ENCODE measurements at regions of chr1 and their contacts with region 1.

Region 1: DNA sequence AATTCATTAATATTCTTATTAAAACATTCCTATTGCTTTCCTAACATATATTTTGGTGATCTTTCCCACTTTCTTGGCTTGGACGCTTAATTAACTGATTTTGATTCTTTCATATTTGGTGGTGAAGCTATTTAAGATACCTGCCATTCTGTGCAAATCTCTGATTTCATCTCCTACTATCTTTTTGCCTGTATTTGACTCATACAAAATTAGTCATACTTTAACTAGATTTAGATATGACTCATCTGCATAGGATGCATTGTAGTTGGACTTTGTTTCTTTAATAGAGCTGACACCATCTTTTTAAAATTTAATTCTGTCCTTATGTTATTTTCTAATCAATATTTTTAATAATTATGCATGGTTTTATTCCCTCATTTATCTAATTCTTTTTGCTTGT is 93.8 kb upstream of the PLPPR4 start:
- DNase-seq: no peak
- ATAC-seq: no peak
- H3K4me3 ChIP-seq: no peak overlapping the region
- H3K27ac ChIP-seq: no peak overlapping the region
- H3K4me1 ChIP-seq: no peaks in the 10 kb centered on the region
- H3K27me3 ChIP-seq: no peaks in the 10 kb centered on the region
- CTCF ChIP-seq: no peak

Region 2: DNA sequence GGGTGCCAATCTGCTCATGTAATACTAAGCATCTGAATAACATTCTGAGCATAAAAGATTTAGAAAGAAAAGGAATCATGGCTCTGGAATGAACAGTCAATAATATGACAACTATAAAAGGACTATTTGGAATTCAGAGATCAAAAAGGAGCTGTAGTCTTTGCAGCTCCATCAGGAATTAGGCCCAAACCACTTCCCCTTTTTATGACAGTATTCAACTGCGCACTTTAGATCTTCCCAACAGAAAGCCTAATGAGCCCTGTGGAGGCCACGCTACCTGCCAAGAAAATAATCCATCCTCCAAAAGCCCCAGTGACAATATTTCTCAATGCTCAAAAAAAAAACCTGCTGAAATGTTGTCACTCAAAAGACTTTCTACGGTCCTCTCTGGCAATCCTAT is 345.8 kb before region 1 on chr1:
- intact Hi-C with region 1: no loop called
- DNase-seq: no peak
- ATAC-seq: no peak
- H3K4me3 ChIP-seq: no peak overlapping the region
- H3K27ac ChIP-seq: no peak overlapping the region
- H3K4me1 ChIP-seq: no peaks in the 10 kb centered on the region
- H3K27me3 ChIP-seq: no peaks in the 10 kb centered on the region
- CTCF ChIP-seq: no peak

Region 3: GRCh38 chr1:99737016-99737415 is 566.5 kb after region 1 on chr1:
- intact Hi-C with region 1: loop called in 1 of 2 experiments (anchors 10 kb)
- DNase-seq: peak in 2 of 4 donors; percentile 3 to 16
- ATAC-seq: peak; percentile 62
- H3K4me3 ChIP-seq: no peak overlapping the region
- H3K27ac ChIP-seq: no peak overlapping the region
- H3K4me1 ChIP-seq: no peaks in the 10 kb centered on the region
- H3K27me3 ChIP-seq: no peaks in the 10 kb centered on the region
- CTCF ChIP-seq: no peak

Measured in left lung (tissue), 14 donors.